Right ventricle myocardium inferior (tissue), 1 donor: ENCODE measurements at regions of chr3 and their contacts with region 1.

Region 1: DNA sequence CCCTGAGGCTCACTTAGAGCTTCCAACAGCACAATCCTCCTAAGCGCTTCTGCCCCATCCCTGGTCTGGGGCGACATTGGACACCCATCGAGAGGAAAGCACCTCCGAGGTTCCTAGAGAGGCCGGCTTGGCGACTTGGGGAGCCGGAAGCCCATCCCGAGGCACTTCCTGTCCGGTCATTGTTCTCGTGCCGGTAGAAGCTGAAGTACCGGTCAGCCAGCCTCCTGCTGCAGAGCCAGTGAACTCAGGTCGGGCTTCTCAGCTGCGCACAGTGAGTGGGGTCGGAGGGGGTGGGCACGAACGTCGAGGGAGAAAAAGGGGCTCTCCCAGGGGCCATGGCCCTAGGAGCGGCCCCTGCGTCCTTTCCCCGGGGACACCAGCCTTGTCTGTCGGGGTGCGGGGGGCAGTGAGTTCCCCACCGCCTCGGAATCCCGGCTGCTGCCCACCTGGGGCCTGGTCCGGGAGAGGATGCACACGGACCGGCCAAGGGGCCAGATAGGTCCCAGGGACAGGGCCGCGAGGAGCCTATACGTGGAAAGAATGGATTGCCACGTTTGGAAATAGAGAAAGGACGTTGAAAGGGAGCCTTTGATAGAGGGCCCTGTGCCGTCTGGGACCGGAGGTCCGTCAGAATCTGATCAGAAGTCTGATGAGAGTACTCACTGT is at the start of gene ZNF35:
- DNase-seq: peak; percentile 81
- ATAC-seq: peak; percentile 93
- total RNA-seq, gene ZNF35: 7.3 TPM

Region 2: DNA sequence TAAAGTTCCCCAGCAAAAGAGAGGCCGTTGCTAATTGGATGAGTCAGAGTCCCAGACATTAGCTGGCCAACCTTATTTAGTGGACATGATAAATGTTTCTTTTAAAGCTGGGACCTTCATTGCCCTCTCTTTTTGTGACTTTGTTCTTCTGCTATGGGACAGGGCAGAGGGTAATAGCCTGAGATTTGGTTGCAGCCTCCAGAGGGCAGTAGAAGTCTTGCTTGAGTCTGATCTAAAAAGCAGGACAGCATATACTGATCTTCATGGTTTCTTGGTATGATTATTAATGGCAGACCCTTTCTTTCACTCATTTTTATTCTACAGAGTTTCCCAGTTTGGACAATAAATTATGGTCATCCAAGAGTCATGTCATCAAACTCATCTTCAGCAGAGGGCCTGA is 118.8 kb before region 1 on chr3:
- intact Hi-C with region 1: no loop called
- DNase-seq: no peak
- ATAC-seq: no peak

Region 3: GRCh38 chr3:44612678-44613077 is 36.0 kb before region 1 on chr3:
- intact Hi-C with region 1: no loop called
- DNase-seq: no peak
- ATAC-seq: no peak

Region 4: GRCh38 chr3:44624749-44625480 is 23.8 kb before region 1 on chr3 and contains the start of gene ZNF197:
- intact Hi-C with region 1: loop called (anchors 2 kb)
- DNase-seq: peak; percentile 89
- ATAC-seq: peak; percentile 98
- total RNA-seq, gene ZNF197: 12.1 TPM